Naive thymus-derived CD4-positive, alpha-beta T cell (primary cell): ENCODE measurements at regions of chr7 and their contacts with region 1.

Region 1: GRCh38 chr7:106736508-106737201 is 75.7 kb upstream of the CCDC71L start:
- DNase-seq: peak in 8 of 9 donors; percentile 21 to 65 (median 54)
- ATAC-seq: peak; percentile 95
- H3K4me3 ChIP-seq: no peak overlapping the region
- H3K4me3 Mint-ChIP-seq: peak overlapping the region in 5 of 10 donors; percentile 9 to 44 (median 22)
- H3K27ac ChIP-seq: no peak overlapping the region
- H3K27ac Mint-ChIP-seq: peak overlapping the region in 2 of 9 donors; percentile 32 to 80
- H3K4me1 ChIP-seq: peaks cover 0 to under 1% of the 10 kb centered on the region in 2 donors
- H3K4me1 Mint-ChIP-seq: peaks cover 10 to 19% (median 18%) of the 10 kb centered on the region in 7 donors
- H3K27me3 ChIP-seq: no peaks in the 10 kb centered on the region
- H3K27me3 Mint-ChIP-seq: no peaks in the 10 kb centered on the region

Region 2: DNA sequence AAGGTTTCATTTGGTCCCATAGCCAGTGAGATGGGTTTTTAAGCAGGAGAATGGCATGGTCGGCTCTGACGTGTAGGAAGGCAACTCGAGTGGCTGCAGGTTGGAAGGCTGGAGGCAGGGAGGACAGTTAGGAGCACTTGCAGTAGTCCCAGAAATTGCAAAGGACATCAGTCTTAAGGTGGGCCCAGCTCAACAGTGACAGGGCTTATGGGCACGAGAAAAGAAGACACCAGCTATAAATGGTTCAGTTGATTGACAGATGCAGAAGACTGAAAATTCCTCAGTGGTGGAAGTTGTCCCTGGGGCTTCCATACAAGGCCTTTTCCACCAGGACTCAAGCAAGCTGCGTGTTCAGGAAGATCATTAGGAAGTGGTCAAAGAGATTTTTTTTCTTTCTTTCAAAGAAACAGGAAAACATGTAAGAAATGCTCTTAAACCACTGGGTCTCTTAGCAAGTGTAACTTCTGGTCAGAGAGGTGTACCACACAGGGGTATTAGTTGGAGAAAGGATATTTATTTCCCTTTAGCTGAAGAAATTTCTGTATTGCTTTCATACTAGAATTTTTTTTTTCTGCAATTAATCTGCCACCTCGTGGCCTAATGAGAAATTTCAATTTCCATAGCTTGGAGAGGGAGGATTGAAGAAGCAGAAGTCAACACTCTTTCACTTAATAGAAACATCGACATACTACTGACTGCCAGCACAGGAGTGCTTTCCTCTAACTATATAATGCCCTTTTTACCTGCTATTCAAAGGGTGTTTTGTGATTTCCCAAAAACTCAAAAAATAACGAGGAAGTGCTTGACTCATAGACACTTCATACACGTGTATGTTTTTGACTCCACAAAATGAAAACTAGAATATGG is 274.4 kb before region 1 on chr7:
- CTCF ChIA-PET with region 1: interaction called, 7 read pairs
- POLR2A ChIA-PET with region 1: no interaction called
- intact Hi-C with region 1: loop called in 1 of 2 experiments (anchors 1 kb)
- DNase-seq: peak in 5 of 9 donors; percentile 11 to 32 (median 14)
- ATAC-seq: peak; percentile 51
- H3K4me3 ChIP-seq: no peak overlapping the region
- H3K4me3 Mint-ChIP-seq: no peak overlapping the region
- H3K27ac ChIP-seq: no peak overlapping the region
- H3K27ac Mint-ChIP-seq: peak overlapping the region in 1 of 9 donors; percentile 14
- H3K4me1 ChIP-seq: no peaks in the 10 kb centered on the region
- H3K4me1 Mint-ChIP-seq: peaks cover 0 to 14% (median 0%) of the 10 kb centered on the region in 7 donors
- H3K27me3 ChIP-seq: no peaks in the 10 kb centered on the region
- H3K27me3 Mint-ChIP-seq: no peaks in the 10 kb centered on the region

Region 3: GRCh38 chr7:106542550-106543220 is 194.0 kb before region 1 on chr7:
- CTCF ChIA-PET with region 1: interaction called, 7 read pairs
- POLR2A ChIA-PET with region 1: no interaction called
- intact Hi-C with region 1: loop called in 1 of 2 experiments (anchors 1 kb)
- DNase-seq: peak in 6 of 9 donors; percentile 14 to 35 (median 26)
- ATAC-seq: peak; percentile 81
- H3K4me3 ChIP-seq: no peak overlapping the region
- H3K4me3 Mint-ChIP-seq: no peak overlapping the region
- H3K27ac ChIP-seq: no peak overlapping the region
- H3K27ac Mint-ChIP-seq: peak overlapping the region in 4 of 9 donors; percentile 4 to 30 (median 12)
- H3K4me1 ChIP-seq: no peaks in the 10 kb centered on the region
- H3K4me1 Mint-ChIP-seq: peaks cover 0 to 10% (median 6%) of the 10 kb centered on the region in 7 donors
- H3K27me3 ChIP-seq: no peaks in the 10 kb centered on the region
- H3K27me3 Mint-ChIP-seq: peaks cover 0 to 6% (median 0%) of the 10 kb centered on the region in 5 donors

Region 4: GRCh38 chr7:106583101-106583500 is 153.6 kb before region 1 on chr7:
- CTCF ChIA-PET with region 1: no interaction called
- POLR2A ChIA-PET with region 1: no interaction called
- intact Hi-C with region 1: no loop called
- DNase-seq: no peak
- ATAC-seq: no peak
- H3K4me3 ChIP-seq: no peak overlapping the region
- H3K4me3 Mint-ChIP-seq: no peak overlapping the region
- H3K27ac ChIP-seq: no peak overlapping the region
- H3K27ac Mint-ChIP-seq: no peak overlapping the region
- H3K4me1 ChIP-seq: no peaks in the 10 kb centered on the region
- H3K4me1 Mint-ChIP-seq: no peaks in the 10 kb centered on the region
- H3K27me3 ChIP-seq: no peaks in the 10 kb centered on the region
- H3K27me3 Mint-ChIP-seq: peaks cover 0 to 8% (median 7%) of the 10 kb centered on the region in 5 donors

Region 5: GRCh38 chr7:106598663-106599342 is 137.9 kb before region 1 on chr7:
- CTCF ChIA-PET with region 1: interaction called, 4 read pairs
- POLR2A ChIA-PET with region 1: no interaction called
- intact Hi-C with region 1: loop called in 1 of 2 experiments (anchors 1 kb)
- DNase-seq: peak; percentile 19 to 80 (median 72)
- ATAC-seq: peak; percentile 100
- H3K4me3 ChIP-seq: no peak overlapping the region
- H3K4me3 Mint-ChIP-seq: peak overlapping the region in 8 of 10 donors; percentile 18 to 75 (median 66)
- H3K27ac ChIP-seq: no peak overlapping the region
- H3K27ac Mint-ChIP-seq: peak overlapping the region in 5 of 9 donors; percentile 52 to 69 (median 58)
- H3K4me1 ChIP-seq: no peaks in the 10 kb centered on the region
- H3K4me1 Mint-ChIP-seq: peaks cover 0 to 9% (median 6%) of the 10 kb centered on the region in 7 donors
- H3K27me3 ChIP-seq: no peaks in the 10 kb centered on the region
- H3K27me3 Mint-ChIP-seq: peaks cover 0 to 14% (median 5%) of the 10 kb centered on the region in 5 donors

Region 6: DNA sequence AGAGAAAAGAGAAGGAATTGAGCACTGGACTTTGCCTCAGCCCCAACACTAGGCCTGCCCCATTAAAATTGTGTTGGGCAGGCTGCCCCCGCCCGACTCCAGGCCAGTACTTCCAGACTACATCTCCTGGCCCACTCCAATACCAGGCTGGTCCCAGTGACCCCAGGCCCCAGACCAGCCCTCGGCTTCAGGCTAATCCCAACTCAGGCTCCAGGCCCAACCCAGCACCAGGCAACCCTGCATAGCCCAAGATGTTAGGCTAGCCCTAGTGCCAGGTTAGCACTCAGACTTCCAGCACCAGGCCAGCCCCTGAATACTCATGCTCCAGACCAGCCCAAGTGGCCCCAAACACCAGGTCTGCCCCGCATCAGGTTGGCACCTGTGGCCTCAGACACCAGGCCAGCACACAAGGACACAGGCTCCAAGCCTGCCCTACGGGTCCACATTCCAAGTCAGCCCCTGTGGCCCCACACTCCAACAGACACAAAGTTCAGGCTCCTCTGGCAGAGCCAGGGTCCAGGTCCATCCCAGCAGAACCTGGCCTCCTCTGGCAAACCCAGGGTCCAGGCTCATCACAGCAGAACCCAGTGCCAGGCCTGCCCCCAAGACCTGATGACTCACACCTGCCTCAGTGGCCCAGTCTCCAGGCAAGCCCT is 806.8 kb after region 1 on chr7:
- CTCF ChIA-PET with region 1: no interaction called
- POLR2A ChIA-PET with region 1: no interaction called
- intact Hi-C with region 1: no loop called
- DNase-seq: no peak
- ATAC-seq: peak; percentile 27
- H3K4me3 ChIP-seq: no peak overlapping the region
- H3K4me3 Mint-ChIP-seq: no peak overlapping the region
- H3K27ac ChIP-seq: no peak overlapping the region
- H3K27ac Mint-ChIP-seq: peak overlapping the region in 1 of 9 donors; percentile 3
- H3K4me1 ChIP-seq: no peaks in the 10 kb centered on the region
- H3K4me1 Mint-ChIP-seq: peaks cover 0 to 17% (median 15%) of the 10 kb centered on the region in 7 donors
- H3K27me3 ChIP-seq: no peaks in the 10 kb centered on the region
- H3K27me3 Mint-ChIP-seq: no peaks in the 10 kb centered on the region